ENCODE measurements at regions of chr5 and their contacts with region 1.

Region 1: DNA sequence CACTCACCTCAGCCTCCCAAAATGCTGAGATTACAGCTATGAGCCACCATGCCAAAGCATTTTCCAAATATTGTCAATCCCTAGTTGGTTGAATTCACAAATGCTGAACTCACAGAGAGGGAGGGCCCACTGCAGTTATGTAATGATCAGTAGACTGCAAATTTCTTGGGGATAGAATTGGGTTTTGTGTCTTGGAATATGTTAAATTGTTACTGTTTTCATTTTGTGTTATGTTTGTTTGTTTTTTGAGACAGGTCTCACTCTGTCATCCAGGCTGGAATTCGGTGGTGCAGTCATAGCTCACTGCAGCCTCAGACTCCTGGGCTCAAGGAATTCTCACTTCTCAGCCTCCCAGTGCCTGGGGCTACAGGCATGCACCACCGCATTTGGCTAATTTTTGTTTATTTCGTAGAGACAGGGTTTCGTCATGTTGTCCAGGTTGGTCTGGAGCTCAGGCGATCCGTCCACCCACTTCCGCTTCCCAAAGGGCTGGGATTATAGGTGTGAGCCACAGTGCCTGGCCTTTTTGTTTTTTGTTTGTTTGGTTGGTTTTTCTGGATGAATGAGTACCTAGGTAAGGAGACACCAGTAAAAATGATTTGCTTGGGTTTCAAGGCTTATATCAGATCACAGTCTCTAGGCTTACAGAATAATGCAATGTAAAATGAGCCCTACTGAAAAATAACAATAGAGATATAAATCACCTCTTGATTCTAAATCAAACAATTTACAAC is 31.5 kb upstream of the LMNB1 start:
- DNase-seq: no peak
- H3K4me3 Mint-ChIP-seq: no peak overlapping the region
- H3K27ac Mint-ChIP-seq: peak overlapping the region; percentile 43
- H3K4me1 Mint-ChIP-seq: peaks cover 46% of the 10 kb centered on the region
- H3K27me3 Mint-ChIP-seq: peaks cover 2% of the 10 kb centered on the region

Region 2: GRCh38 chr5:126600631-126601511 is 144.6 kb before region 1 on chr5 and contains the start of gene PHAX:
- intact Hi-C with region 1: loop called (anchors 5 kb)
- DNase-seq: peak; percentile 64
- H3K4me3 Mint-ChIP-seq: peak within 1 kb of the TSS; percentile 94
- H3K27ac Mint-ChIP-seq: peak within 1 kb of the TSS; percentile 95
- H3K4me1 Mint-ChIP-seq: peaks cover 22% of the 10 kb centered on the region
- H3K27me3 Mint-ChIP-seq: peaks cover 2% of the 10 kb centered on the region
- total RNA-seq, gene PHAX: 45.3 and 47.7 TPM in 2 replicates

Region 3: DNA sequence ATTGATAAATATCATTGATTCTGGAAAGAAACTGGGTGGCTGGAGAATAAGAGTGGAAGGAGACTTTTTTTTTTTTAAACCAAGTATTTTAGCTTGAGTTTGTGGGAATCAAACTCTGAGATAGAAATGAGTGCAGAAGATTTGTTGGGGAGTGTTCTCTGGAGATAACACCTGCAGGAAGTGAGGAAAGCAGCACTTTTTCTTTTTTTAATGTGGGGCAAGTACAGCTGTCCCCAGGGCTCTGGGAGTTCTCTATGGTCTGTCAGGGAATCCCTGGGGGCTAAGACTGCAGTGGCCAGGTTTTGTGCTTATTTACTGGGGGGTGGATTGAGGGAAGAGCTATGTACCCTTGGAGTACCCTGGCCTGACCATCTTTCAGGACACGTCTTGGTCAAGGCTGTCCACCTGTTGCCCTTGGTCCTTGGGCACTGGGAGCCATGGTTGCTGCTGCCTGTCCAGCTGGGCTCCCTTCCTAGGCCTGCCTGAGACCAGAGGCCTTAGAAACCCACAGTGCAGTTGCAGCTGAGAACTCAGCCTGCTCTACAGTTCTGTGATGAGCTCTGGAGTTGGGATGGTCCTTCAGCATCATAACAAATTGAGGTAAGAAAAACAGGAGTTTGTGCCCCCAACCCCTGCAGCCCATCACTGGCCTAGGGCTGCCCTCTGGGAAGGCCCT is 58.8 kb before region 1 on chr5:
- intact Hi-C with region 1: loop called (anchors 2 kb)
- DNase-seq: no peak
- H3K4me3 Mint-ChIP-seq: no peak overlapping the region
- H3K27ac Mint-ChIP-seq: peak overlapping the region; percentile 47
- H3K4me1 Mint-ChIP-seq: peaks cover 25% of the 10 kb centered on the region
- H3K27me3 Mint-ChIP-seq: no peaks in the 10 kb centered on the region

Region 4: DNA sequence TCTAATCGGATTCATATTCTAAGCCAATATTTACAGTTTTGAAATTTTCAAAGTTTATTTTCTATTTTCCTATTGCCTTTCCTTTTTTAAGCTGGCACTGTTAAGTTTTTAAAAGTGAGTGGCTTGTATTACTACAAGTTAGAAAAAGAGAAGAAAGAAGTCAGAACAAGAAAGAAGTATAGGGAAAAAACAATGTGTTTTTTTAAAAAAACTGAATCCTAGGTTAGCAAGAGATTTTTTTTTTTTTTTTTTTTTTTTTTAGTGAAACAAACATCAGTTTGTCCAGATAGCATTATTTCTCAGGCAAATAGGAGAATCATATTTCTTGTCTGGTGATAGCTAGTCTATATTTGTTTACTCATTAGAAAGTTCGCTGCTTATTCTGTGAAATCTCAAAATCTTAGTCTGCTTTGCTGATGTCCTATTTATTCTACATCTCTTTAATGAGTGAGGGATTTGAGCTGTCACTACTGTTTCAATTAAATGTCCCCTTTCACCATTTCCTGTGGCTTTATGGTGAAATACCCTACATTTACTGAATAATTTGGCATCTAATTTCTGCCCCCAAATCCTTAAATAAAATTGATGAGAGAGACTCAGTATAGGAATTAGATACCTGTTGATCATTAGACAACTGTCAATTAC is 12.4 kb after region 1 on chr5:
- intact Hi-C with region 1: loop called (anchors 1 kb)
- DNase-seq: no peak
- H3K4me3 Mint-ChIP-seq: peak overlapping the region; percentile 66
- H3K27ac Mint-ChIP-seq: peak overlapping the region; percentile 95
- H3K4me1 Mint-ChIP-seq: peaks cover 38% of the 10 kb centered on the region
- H3K27me3 Mint-ChIP-seq: no peaks in the 10 kb centered on the region

Region 5: DNA sequence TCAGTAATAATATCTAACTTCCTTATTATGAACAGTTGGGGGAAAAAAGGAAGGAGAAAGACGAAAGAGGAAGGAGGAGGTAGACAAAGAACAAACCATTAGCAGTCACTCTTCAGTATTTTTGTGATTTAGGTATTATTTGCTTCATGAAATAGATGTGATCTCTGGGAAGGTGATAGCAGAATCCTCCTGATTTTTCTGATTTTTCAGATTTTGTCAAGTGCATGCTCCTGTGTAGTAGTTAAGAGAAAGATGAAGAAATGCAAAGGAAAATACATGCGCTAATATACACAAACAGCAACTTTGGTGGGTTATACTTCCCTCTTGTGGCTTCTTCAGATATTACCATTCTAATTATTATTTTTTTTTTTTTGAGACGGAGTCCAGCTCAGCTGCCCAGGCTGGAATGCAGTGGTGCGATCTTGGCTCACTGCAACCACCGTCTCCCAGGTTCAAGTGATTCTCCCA is 63.1 kb after region 1 on chr5:
- intact Hi-C with region 1: loop called (anchors 2 kb)
- DNase-seq: no peak
- H3K4me3 Mint-ChIP-seq: no peak overlapping the region
- H3K27ac Mint-ChIP-seq: peak overlapping the region; percentile 39
- H3K4me1 Mint-ChIP-seq: peaks cover 43% of the 10 kb centered on the region
- H3K27me3 Mint-ChIP-seq: no peaks in the 10 kb centered on the region